ENCODE measurements at regions of chr1 and their contacts with region 1.

Region 1: DNA sequence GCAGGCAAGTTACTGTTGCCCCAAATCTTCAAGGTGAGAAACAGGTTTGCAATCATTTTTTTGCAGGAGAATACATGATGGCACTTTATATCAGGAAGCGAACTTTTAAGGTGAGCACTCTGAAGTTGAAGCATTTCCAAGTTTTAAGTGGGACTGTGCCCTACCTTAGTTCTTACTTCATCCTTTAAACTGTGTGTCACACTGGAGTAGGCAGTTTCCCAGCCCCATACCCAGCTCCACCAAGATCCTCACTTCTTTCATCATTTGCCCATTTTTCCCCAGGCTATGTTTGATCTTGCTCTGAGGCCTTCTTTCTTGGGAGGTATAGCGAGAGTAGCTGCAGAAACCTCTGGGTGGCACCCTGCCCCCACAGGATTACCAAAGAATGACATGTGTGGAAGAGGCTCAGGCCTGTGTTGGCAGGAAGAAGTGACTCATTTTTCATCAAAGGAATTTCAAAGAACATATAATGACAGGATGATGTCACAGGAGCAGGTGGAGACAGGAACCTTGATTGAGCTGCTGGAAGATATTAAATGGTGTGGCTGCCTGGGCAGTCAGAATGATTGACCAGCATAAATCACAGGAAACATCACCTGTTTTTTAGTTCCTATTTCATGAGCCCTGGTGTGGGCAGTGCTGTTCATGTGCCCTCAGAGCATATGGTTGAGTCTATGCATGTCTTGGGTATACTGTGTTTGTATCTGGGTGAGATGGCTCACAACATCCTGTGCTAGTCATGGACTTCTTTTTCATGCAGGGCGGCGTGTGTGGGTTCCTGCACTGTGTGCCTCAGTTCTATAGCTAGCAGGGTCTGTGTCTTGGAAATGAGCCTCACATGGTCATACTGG is 20.8 kb upstream of the MACF1 start:
- DNase-seq: peak; percentile 96
- ATAC-seq: peak; percentile 91
- H3K4me3 ChIP-seq: peak overlapping the region in 1 of 2 experiments; percentile 18; a peak in 2 of 4 replicates
- H3K27ac ChIP-seq: peak overlapping the region; percentile 55
- H3K4me1 ChIP-seq: peaks cover 48 to 63% of the 10 kb centered on the region in 2 experiments
- H3K27me3 ChIP-seq: no peaks in the 10 kb centered on the region
- CTCF ChIP-seq: peak; percentile 42 to 66 (median 59); a peak in 5 of 6 replicates
- POLR2A ChIP-seq: no peak
- RAD21 ChIP-seq: peak; percentile 80

Region 2: DNA sequence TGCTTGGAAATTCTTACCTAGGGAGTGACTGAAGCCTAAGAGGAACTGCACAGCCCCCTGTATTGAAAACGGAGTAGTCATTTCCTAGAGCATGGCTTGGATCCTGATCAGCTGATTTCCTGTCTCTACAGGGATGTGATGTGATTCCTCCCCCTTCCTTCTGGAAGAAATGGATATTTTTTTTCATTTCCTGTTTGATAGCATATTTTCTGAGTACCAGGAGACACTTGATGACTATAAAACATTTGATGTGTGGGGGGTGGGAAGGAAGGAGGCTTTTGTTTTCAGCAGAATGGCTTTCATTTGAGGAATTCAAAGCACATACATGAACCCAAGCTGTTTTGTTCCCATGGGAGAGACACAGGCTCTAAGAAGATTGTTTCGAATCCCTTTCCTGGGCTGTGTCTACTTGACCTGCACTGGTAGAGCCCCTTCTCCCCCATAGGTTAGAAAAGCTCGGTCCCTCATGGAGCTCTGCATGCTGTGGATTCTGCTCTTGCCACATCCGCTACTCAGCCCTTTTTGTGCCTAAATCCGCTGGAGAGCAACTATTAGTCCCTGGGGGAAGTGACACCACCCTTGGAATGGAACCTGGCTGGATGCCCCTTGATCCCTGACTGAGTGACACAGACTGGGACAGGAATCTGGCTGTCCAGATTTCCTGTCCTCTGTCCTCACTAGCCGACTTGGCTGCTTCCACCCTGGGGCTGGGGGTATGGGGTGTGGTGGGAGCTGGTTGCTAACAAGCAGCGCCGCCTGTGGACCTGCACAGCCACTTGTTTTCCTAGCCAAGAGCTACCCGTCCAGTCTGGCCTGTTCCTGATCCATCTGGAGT is 51.0 kb before region 1 on chr1:
- CTCF ChIA-PET with region 1: interaction called, 3 read pairs
- POLR2A ChIA-PET with region 1: no interaction called
- RAD21 ChIA-PET with region 1: no interaction called
- intact Hi-C with region 1: loop called (anchors 5 kb)
- DNase-seq: peak; percentile 44
- ATAC-seq: peak; percentile 78
- H3K4me3 ChIP-seq: no peak overlapping the region
- H3K27ac ChIP-seq: peak overlapping the region; percentile 25; the same call in 1 of the 2 replicates
- H3K4me1 ChIP-seq: peaks cover 45 to 48% of the 10 kb centered on the region in 2 experiments
- H3K27me3 ChIP-seq: no peaks in the 10 kb centered on the region
- CTCF ChIP-seq: peak in 2 of 3 experiments; percentile 26 to 38; a peak in 2 of 6 replicates
- POLR2A ChIP-seq: no peak
- RAD21 ChIP-seq: peak; percentile 53

Region 3: GRCh38 chr1:39354572-39354971 is 170.8 kb after region 1 on chr1:
- CTCF ChIA-PET with region 1: no interaction called
- POLR2A ChIA-PET with region 1: no interaction called
- RAD21 ChIA-PET with region 1: no interaction called
- intact Hi-C with region 1: no loop called
- DNase-seq: no peak
- ATAC-seq: no peak
- H3K4me3 ChIP-seq: no peak overlapping the region
- H3K27ac ChIP-seq: no peak overlapping the region
- H3K4me1 ChIP-seq: no peaks in the 10 kb centered on the region
- H3K27me3 ChIP-seq: no peaks in the 10 kb centered on the region
- CTCF ChIP-seq: 0 out of 6 replicates have a peak, but pooled peaks of 2 of the 3 experiments have one; percentile 5 to 15
- POLR2A ChIP-seq: no peak
- RAD21 ChIP-seq: peak; percentile 11; the same call in 1 of the 2 replicates